ENCODE measurements at regions of chr16 and their contacts with region 1.

Region 1: DNA sequence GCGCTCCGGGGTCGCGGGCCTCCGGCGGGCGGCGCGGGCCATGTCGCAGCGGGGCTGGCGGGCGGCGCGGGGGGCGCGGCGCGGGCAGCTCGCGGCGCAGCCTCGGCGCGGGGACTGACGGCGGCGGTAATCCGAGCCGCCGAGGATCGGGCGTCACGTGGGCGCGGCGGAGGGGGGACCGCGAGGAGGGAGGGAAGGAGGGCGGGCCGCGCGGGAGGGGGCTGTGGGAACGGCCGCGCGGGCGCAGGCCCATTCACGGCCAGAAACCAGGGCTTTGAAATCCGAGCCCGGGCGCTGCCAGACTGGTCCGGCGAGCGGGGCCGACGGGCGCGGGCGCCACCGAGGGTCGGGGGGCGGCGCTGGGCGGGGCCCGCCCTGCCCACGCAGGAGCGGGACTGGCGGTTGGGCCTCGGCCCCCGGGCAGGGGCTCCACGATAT is at the start of gene MTSS2:
- DNase-seq: peak; percentile 93
- ATAC-seq: peak; percentile 66
- total RNA-seq, gene MTSS2: 101 TPM

Region 2: DNA sequence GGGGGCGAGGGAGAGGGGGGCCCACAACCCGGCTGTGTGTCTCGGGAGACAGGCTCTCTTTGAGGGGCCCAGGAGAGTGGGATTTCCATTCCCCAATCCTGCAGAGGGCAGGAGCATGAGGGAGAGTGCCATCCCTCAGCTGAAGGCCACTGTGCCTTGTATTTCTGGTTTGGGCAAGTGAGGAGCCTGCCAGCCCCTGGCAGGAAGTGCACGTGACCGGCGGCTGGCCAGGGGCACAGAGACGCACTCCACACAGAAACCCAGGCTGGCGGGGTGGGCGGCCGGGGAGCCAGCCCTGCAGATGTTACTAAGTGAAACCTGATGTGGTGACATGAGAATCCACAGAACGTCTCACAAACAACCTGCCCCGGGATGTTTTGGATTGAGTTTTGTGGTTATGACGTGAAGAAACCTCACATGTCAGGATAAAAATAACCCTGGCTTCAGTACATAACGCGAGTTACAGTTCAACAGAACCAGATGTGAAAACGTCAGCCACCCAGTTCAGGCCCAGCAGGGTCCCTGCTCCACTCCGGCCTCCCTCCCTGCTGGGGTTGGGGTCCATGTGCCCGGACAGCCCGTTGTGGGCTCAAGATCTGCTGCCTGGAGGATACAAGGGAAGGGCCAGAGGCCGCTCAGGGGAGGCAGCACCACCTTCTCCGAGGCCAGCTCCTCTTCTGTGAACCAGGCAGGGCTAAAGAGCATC is 51.6 kb after region 1 on chr16:
- intact Hi-C with region 1: loop called (anchors 10 kb)
- DNase-seq: peak; percentile 90
- ATAC-seq: peak; percentile 78

Region 3: DNA sequence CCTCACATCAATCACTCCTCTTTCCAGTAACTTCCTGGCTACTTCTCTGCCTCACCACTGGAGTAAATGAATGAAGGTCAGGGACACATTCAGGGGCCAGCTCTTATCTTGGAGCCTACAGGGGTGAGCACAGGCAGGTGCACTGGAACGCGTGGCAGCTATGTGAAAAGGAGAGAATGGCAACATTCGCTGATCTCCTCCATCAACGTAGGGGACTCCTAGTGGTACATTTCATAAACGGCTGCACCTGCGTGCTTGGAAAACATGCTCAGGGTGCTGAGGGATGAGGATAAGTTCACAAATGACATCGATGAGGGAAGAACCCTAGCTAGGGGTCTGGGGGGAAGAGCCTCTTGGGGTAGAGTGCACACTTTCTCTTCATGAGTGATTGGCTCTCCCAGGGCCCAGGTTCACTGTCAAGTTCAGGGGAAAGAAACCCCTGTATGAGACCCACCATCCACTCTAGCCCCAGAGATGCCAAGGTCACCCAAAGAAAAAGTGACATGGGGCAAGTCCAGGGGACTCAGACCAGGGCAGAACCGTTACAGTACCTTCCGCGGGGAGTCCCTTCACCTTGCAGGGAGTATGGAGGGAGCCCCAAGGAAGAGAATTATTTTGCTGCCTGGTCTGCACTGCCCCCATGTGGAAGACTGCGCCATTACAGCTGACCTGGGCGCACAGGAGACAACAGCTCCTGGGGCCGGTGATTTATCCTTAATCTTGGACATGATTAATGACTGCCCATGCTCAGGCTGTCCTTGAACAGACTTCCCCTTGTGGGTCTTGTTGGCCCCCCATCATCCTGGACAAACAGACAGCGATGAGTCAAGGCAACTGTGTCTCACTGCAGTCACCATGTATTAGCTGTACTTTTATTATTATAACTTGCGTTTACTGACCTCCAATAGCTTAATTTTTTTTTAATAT is 84.9 kb after region 1 on chr16:
- intact Hi-C with region 1: loop called (anchors 10 kb)
- DNase-seq: peak; percentile 68
- ATAC-seq: peak; percentile 77

Measured in left ventricle myocardium superior (tissue), 1 donor.